Activated CD8-positive, alpha-beta memory T cell treated with anti-CD3 and anti-CD28 coated beads, Interleukin-2, amount 10 ng/mL, durations not matched to agents 7 days and 5 days (primary cell): ENCODE measurements at regions of chr18 and their contacts with region 1.

Region 1: DNA sequence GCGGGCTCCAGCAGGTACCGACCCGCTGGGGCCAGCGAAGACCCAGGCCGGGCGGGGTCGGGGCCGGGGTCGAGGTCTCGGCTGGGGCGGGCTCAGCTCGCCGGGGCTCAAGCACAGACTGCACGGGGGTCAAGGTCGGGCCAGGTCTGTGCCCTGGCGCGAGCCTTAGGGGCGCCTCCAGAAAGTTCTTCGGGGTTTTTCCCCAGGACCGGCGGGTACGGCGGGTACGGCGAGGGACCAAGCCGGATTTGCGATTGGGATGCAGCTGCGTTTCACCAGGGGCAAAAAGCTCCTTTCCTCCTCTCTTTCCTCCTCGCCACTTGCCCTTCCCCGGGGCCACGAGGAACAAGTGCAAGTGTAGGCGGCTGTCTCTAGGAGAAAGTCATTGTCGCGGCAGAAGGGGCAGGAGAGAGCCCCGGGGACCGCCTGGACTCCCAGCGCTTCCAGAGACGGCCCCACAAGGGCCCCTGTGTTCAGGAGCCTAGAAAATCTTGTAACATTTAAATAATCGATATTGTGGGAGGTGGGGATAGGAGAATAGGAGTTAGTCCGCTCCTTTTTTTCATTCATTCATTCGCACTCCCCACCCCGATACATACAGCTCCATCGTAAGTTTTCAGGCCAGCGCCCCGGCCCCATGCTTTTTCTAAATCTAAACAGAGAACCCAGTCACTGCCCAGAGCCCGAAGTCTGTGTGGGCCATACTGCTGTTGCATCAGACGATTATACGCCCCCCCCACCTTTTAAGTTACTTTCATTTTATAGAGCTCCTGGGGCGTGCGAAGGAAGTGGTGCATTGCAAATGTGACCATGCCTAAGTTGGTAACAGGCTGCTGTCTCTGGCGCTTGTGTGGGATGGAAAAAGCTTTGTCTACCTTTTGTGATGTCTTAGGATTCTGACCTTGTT is 679 bp downstream of the PMAIP1 start:
- DNase-seq: peak; percentile 85
- ATAC-seq: peak; percentile 52
- H3K4me3 Mint-ChIP-seq: peak overlapping the region; percentile 86
- H3K27ac Mint-ChIP-seq: peak overlapping the region; percentile 98
- H3K4me1 Mint-ChIP-seq: peaks cover 46% of the 10 kb centered on the region
- H3K27me3 Mint-ChIP-seq: no peaks in the 10 kb centered on the region

Region 2: DNA sequence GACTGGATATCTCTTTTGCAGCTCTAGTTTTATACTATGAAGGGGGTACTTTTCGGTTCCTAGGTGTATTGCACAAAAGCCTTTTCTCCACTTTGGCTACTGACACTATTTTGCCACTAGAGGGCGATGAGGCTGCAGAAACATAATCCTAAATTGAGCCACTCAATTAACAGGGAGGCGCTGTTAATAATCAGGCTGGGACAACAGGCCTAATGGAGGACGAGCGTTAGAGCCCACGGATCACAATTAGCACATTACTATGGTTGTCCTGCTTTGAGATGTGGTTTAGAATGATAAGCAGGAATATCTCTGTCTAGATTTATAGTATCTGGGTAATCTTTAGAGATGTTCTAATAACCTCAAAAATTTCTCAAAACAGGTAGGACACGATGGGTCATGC is 62.9 kb before region 1 on chr18:
- CTCF ChIA-PET with region 1: interaction called, 12 read pairs
- DNase-seq: peak; percentile 65
- ATAC-seq: peak; percentile 67
- H3K4me3 Mint-ChIP-seq: no peak overlapping the region
- H3K27ac Mint-ChIP-seq: no peak overlapping the region
- H3K4me1 Mint-ChIP-seq: peaks cover 16% of the 10 kb centered on the region
- H3K27me3 Mint-ChIP-seq: peaks cover 11% of the 10 kb centered on the region